Panc1 (cell line): ENCODE measurements at regions of chr4 and their contacts with region 1.

Region 1: GRCh38 chr4:188053302-188053701 is 56.1 kb downstream of the TRIML2 start:
- DNase-seq: no peak
- ATAC-seq: no peak
- H3K4me3 ChIP-seq: no peak overlapping the region
- H3K27ac ChIP-seq: no peak overlapping the region
- H3K4me1 ChIP-seq: no peaks in the 10 kb centered on the region
- H3K27me3 ChIP-seq: no peaks in the 10 kb centered on the region
- CTCF ChIP-seq: no peak

Region 2: GRCh38 chr4:187962926-187963325 is 90.4 kb before region 1 on chr4:
- CTCF ChIA-PET with region 1: no interaction called
- POLR2A ChIA-PET with region 1: no interaction called
- in situ Hi-C with region 1: no loop called
- intact Hi-C with region 1: no loop called
- DNase-seq: no peak
- ATAC-seq: no peak
- H3K4me3 ChIP-seq: no peak overlapping the region
- H3K27ac ChIP-seq: no peak overlapping the region
- H3K4me1 ChIP-seq: no peaks in the 10 kb centered on the region
- H3K27me3 ChIP-seq: no peaks in the 10 kb centered on the region
- CTCF ChIP-seq: no peak

Region 3: GRCh38 chr4:188078116-188078515 is 24.8 kb after region 1 on chr4:
- CTCF ChIA-PET with region 1: no interaction called
- POLR2A ChIA-PET with region 1: no interaction called
- in situ Hi-C with region 1: no loop called
- intact Hi-C with region 1: loop called (anchors 1 kb)
- DNase-seq: no peak
- ATAC-seq: no peak
- H3K4me3 ChIP-seq: no peak overlapping the region
- H3K27ac ChIP-seq: no peak overlapping the region
- H3K4me1 ChIP-seq: no peaks in the 10 kb centered on the region
- H3K27me3 ChIP-seq: no peaks in the 10 kb centered on the region
- CTCF ChIP-seq: no peak

Region 4: GRCh38 chr4:188295899-188296298 is 242.6 kb after region 1 on chr4:
- CTCF ChIA-PET with region 1: no interaction called
- POLR2A ChIA-PET with region 1: no interaction called
- in situ Hi-C with region 1: no loop called
- intact Hi-C with region 1: no loop called
- DNase-seq: no peak
- ATAC-seq: no peak
- H3K4me3 ChIP-seq: no peak overlapping the region
- H3K27ac ChIP-seq: no peak overlapping the region
- H3K4me1 ChIP-seq: no peaks in the 10 kb centered on the region
- H3K27me3 ChIP-seq: no peaks in the 10 kb centered on the region
- CTCF ChIP-seq: no peak